SK-N-SH (cell line): ENCODE measurements at regions of chr4 and their contacts with region 1.

Region 1: GRCh38 chr4:157978680-157979361 is 194.0 kb downstream of the GASK1B start:
- DNase-seq: peak; percentile 56
- H3K4me3 ChIP-seq: peak overlapping the region in 1 of 2 experiments; percentile 55; a peak in 1 of 4 replicates
- H3K27ac ChIP-seq: peak overlapping the region in 1 of 2 experiments; percentile 28; a peak in 1 of 4 replicates
- H3K4me1 ChIP-seq: no peaks in the 10 kb centered on the region; a peak in 1 of 4 replicates
- H3K27me3 ChIP-seq: no peaks in the 10 kb centered on the region
- CTCF ChIP-seq: peak; percentile 91
- EP300 ChIP-seq: peak in 1 of 2 experiments; percentile 6; a peak in 1 of 4 replicates
- RAD21 ChIP-seq: peak; percentile 95

Region 2: DNA sequence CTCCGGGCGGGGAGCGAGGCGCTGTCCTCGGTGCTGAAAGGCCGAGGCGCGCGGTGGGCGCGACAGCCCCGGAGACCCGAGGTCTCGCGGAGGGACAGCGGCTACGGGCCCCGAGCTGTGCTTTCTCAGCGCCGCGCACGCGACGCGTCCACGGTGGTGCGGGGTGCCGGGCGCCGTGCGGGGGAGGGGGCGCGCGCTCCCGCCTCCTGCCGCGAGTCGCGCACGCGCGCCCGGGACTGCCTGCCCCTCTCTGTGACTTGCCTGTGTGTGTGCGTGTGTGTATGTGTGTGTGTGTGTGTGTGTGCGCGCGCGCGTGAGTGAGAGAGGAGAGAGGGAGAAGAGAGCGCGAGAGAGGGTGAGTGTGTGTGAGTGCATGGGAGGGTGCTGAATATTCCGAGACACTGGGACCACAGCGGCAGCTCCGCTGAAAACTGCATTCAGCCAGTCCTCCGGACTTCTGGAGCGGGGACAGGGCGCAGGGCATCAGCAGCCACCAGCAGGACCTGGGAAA is 758.4 kb before region 1 on chr4 and contains the start of gene GRIA2:
- CTCF ChIA-PET with region 1: interaction called, 93 read pairs
- POLR2A ChIA-PET with region 1: interaction called, 5 read pairs
- DNase-seq: peak; percentile 89
- H3K4me3 ChIP-seq: peak within 1 kb of the TSS; percentile 57 to 59
- H3K27ac ChIP-seq: peak within 1 kb of the TSS in 1 of 2 experiments; percentile 71; a peak in 2 of 4 replicates
- H3K4me1 ChIP-seq: peaks cover 0 to 8% of the 10 kb centered on the region in 2 experiments; a peak in 2 of 4 replicates
- H3K27me3 ChIP-seq: peaks cover 28% of the 10 kb centered on the region
- CTCF ChIP-seq: no peak
- EP300 ChIP-seq: no peak
- RAD21 ChIP-seq: no peak
- polyA plus RNA-seq, gene GRIA2: 0.16 and 1.1 TPM in 2 replicates

Region 3: DNA sequence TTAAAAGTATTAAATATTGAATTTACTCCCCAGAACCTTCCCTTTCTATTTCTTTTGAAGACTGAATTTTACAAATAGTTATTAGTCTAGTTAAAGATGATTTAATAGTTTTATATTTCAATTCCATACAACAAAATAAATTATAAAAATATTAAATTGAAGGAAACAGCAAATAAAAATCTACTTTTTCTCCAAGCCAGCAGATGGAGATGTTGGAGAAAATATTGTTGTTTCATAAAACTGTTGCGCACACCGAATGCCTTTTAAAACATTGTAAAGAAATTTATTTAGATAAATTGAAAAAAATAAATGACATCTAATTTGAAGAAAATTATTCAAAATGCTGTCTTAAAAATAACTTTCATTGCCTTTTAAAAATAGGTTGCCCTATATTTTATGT is 752.8 kb before region 1 on chr4:
- CTCF ChIA-PET with region 1: interaction called, 93 read pairs
- POLR2A ChIA-PET with region 1: interaction called, 5 read pairs
- DNase-seq: no peak
- H3K4me3 ChIP-seq: no peak overlapping the region
- H3K27ac ChIP-seq: no peak overlapping the region
- H3K4me1 ChIP-seq: peaks cover 0 to 6% of the 10 kb centered on the region in 2 experiments; a peak in 2 of 4 replicates
- H3K27me3 ChIP-seq: peaks cover 21% of the 10 kb centered on the region
- CTCF ChIP-seq: no peak
- EP300 ChIP-seq: no peak
- RAD21 ChIP-seq: peak; percentile 62

Region 4: DNA sequence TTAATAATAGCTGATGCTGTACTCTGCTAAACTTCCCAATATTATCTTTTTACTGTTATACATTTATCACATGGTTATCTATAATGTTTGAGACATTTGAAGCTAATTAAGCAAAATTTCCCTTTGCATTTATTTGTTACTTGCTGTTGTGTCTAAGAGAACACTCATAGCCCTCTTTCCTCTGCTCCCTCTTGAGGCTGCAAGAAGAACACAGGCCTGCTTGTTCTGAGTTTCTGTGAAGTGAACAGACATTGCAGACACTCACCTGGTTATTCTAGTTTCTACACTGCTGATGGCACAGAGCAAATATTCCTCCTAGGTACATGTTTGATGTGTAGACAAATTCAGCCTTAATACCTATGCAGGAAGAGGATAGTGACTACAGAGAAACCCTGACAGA is 173.8 kb before region 1 on chr4:
- CTCF ChIA-PET with region 1: interaction called, 17 read pairs
- POLR2A ChIA-PET with region 1: no interaction called
- DNase-seq: no peak
- H3K4me3 ChIP-seq: no peak overlapping the region
- H3K27ac ChIP-seq: peak overlapping the region in 1 of 2 experiments; percentile 94; a peak in 2 of 4 replicates
- H3K4me1 ChIP-seq: peaks cover 0 to 3% of the 10 kb centered on the region in 2 experiments; a peak in 1 of 4 replicates
- H3K27me3 ChIP-seq: no peaks in the 10 kb centered on the region
- CTCF ChIP-seq: peak; percentile 47
- EP300 ChIP-seq: no peak
- RAD21 ChIP-seq: peak; percentile 54